Endothelial cell of umbilical vein (primary cell): ENCODE measurements at regions of chr7 and their contacts with region 1.

Region 1: GRCh38 chr7:30164567-30164966 is 29.8 kb downstream of the MTURN start:
- DNase-seq: peak; percentile 74
- H3K4me3 ChIP-seq: no peak overlapping the region
- H3K27ac ChIP-seq: no peak overlapping the region
- H3K4me1 ChIP-seq: peaks cover 31% of the 10 kb centered on the region
- H3K27me3 ChIP-seq: peaks cover 0 to under 1% of the 10 kb centered on the region in 2 experiments
- CTCF ChIP-seq: peak; percentile 37
- POLR2A ChIP-seq: no peak

Region 2: DNA sequence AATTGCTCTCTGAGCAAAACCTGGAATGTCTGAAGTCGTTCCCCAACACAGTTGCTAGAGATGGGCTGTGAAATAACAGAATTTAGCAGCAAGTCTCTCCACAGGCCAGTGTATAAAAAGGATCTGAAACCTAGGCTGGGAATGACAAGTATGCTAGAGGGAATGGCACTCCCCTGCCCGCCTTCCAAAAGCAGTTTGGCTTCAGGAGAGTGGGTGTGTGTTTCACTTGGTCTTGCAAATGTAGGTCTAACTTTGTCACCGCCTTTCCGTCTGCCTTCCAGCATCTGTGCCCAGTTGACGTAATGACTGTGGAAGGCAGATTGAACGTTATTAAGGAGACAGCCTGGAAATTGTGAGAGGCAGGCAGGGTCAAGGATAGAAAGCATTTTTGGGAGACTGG is 47.8 kb before region 1 on chr7:
- CTCF ChIA-PET with region 1: no interaction called
- POLR2A ChIA-PET with region 1: no interaction called
- dilution Hi-C with region 1: no loop called
- intact Hi-C with region 1: no loop called
- DNase-seq: no peak
- H3K4me3 ChIP-seq: no peak overlapping the region
- H3K27ac ChIP-seq: no peak overlapping the region
- H3K4me1 ChIP-seq: no peaks in the 10 kb centered on the region
- H3K27me3 ChIP-seq: no peaks in the 10 kb centered on the region
- CTCF ChIP-seq: no peak
- POLR2A ChIP-seq: no peak

Region 3: GRCh38 chr7:30178748-30179436 is 14.3 kb after region 1 on chr7:
- CTCF ChIA-PET with region 1: interaction called, 12 read pairs
- POLR2A ChIA-PET with region 1: no interaction called
- dilution Hi-C with region 1: no loop called
- intact Hi-C with region 1: no loop called
- DNase-seq: no peak
- H3K4me3 ChIP-seq: no peak overlapping the region
- H3K27ac ChIP-seq: no peak overlapping the region
- H3K4me1 ChIP-seq: no peaks in the 10 kb centered on the region
- H3K27me3 ChIP-seq: no peaks in the 10 kb centered on the region
- CTCF ChIP-seq: no peak
- POLR2A ChIP-seq: no peak

Region 4: DNA sequence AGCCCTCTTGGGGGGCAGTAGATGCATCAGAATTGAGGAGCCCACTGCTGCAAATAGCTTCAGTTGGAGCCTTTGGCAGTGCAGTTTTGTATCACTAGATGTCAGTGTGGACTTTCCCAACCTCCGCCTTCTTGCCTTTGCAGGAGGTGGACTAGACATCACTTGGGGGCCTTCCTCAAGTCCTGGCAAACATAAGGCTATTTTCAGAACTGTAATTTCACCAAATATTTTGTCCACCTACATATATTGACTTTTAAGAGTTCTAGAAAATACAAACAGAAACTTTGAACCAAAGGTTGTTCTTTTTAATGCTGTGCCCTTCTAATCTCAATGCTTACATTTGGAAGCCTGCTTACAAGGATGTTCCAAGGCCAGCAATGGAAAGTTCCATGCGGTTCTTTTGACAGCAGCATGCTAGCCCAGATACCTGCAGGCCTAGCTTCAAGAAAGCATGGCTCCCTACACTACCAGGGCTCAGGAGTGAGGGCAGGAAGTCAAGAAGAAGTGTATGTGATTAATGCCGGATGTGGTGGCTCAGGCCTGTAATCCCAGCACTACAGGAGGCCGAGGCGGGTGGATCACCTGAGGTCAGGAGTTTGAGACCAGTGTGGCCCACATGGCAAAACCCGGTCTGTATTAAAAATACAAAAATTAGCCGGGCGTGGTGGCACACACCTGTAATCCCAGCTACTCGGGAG is 111.8 kb after region 1 on chr7:
- CTCF ChIA-PET with region 1: interaction called, 26 read pairs
- POLR2A ChIA-PET with region 1: no interaction called
- dilution Hi-C with region 1: no loop called
- intact Hi-C with region 1: loop called (anchors 1 kb)
- DNase-seq: peak; percentile 69
- H3K4me3 ChIP-seq: no peak overlapping the region
- H3K27ac ChIP-seq: no peak overlapping the region
- H3K4me1 ChIP-seq: no peaks in the 10 kb centered on the region
- H3K27me3 ChIP-seq: peaks cover 0 to 2% of the 10 kb centered on the region in 2 experiments
- CTCF ChIP-seq: peak; percentile 52 to 72
- POLR2A ChIP-seq: no peak

Region 5: GRCh38 chr7:30412810-30413504 is 248.4 kb after region 1 on chr7:
- CTCF ChIA-PET with region 1: interaction called, 46 read pairs
- POLR2A ChIA-PET with region 1: no interaction called
- dilution Hi-C with region 1: no loop called
- intact Hi-C with region 1: loop called (anchors 1 kb)
- DNase-seq: peak; percentile 90
- H3K4me3 ChIP-seq: no peak overlapping the region
- H3K27ac ChIP-seq: no peak overlapping the region
- H3K4me1 ChIP-seq: no peaks in the 10 kb centered on the region
- H3K27me3 ChIP-seq: no peaks in the 10 kb centered on the region
- CTCF ChIP-seq: peak; percentile 57 to 62
- POLR2A ChIP-seq: no peak

Region 6: DNA sequence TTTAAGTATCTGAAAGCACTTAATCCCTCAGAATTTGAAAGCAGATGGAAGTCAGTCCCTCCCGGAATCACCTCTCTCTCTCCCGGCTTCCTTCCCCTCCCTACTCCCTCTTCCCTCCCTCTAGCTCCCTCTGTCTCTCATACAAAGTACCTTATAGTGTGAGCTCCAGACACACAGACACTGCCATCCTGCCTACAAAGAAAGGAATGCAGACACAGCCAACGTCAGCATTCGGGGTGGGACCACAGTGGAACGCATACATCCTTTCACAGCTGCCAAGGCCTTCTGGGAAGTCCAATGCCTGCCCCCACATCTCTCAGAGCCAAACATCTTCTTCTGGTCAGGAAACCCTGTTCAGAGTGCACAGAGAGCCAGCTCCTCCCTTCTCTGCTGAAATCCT is 304.7 kb after region 1 on chr7:
- CTCF ChIA-PET with region 1: interaction called, 4 read pairs
- POLR2A ChIA-PET with region 1: no interaction called
- dilution Hi-C with region 1: no loop called
- intact Hi-C with region 1: loop called (anchors 5 kb)
- DNase-seq: peak; percentile 99
- H3K4me3 ChIP-seq: no peak overlapping the region
- H3K27ac ChIP-seq: peak overlapping the region; percentile 93
- H3K4me1 ChIP-seq: peaks cover 60% of the 10 kb centered on the region
- H3K27me3 ChIP-seq: no peaks in the 10 kb centered on the region
- CTCF ChIP-seq: peak; percentile 49 to 52
- POLR2A ChIP-seq: peak; percentile 43